ENCODE measurements at regions of chr10 and their contacts with region 1.

Region 1: DNA sequence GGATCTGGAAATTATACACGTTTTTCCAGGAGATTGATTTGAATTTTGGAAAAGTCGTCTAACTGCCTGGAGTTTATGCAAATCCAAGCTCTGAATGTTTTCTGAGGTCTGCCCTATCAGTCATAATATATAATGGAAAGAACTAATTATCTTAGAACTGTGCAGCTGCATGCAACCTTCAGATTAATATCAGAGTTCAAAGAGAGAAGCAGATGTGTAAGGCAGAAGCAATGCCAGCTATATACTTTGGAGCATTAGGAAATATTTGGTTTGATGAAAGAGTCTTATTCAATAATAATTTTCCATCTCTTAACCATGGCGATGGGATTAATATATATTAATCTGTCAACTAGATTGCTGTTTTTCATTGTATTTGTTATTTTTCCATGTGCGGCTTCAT is 500.9 kb downstream of the NEBL start:
- DNase-seq: no peak
- ATAC-seq: no peak
- H3K4me3 Mint-ChIP-seq: no peak overlapping the region
- H3K27ac Mint-ChIP-seq: no peak overlapping the region
- H3K4me1 Mint-ChIP-seq: peaks cover 3% of the 10 kb centered on the region; the same call in 1 of the 2 replicates
- H3K27me3 Mint-ChIP-seq: no peaks in the 10 kb centered on the region
- CTCF ChIP-seq: no peak

Region 2: DNA sequence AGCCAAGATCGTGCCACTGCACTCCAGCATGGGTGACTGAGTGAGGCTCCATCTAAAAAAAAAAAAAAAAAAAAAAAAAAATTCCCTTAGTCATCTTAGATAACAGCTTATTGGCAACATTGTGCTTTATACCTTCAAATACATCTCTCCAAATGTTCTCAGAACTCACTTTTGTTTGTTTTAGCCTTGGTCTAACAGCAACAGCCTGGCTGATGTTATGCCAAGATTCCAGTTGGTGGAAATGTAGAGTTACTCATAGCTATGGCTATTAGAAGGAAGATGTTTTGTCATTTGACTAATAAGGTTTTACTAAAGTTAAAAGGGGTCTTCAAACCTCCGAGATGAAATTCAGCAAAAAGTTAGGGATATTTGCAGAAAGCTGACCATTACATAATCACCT is 19.5 kb after region 1 on chr10:
- CTCF ChIA-PET with region 1: no interaction called
- POLR2A ChIA-PET with region 1: no interaction called
- DNase-seq: no peak
- ATAC-seq: no peak
- H3K4me3 Mint-ChIP-seq: no peak overlapping the region
- H3K27ac Mint-ChIP-seq: no peak overlapping the region
- H3K4me1 Mint-ChIP-seq: peaks cover 15% of the 10 kb centered on the region
- H3K27me3 Mint-ChIP-seq: no peaks in the 10 kb centered on the region
- CTCF ChIP-seq: no peak

Region 3: GRCh38 chr10:20427821-20428220 is 31.6 kb after region 1 on chr10:
- CTCF ChIA-PET with region 1: no interaction called
- POLR2A ChIA-PET with region 1: no interaction called
- DNase-seq: no peak
- ATAC-seq: no peak
- H3K4me3 Mint-ChIP-seq: no peak overlapping the region
- H3K27ac Mint-ChIP-seq: no peak overlapping the region
- H3K4me1 Mint-ChIP-seq: no peaks in the 10 kb centered on the region
- H3K27me3 Mint-ChIP-seq: no peaks in the 10 kb centered on the region; the same call in 1 of the 2 replicates
- CTCF ChIP-seq: no peak

Region 4: DNA sequence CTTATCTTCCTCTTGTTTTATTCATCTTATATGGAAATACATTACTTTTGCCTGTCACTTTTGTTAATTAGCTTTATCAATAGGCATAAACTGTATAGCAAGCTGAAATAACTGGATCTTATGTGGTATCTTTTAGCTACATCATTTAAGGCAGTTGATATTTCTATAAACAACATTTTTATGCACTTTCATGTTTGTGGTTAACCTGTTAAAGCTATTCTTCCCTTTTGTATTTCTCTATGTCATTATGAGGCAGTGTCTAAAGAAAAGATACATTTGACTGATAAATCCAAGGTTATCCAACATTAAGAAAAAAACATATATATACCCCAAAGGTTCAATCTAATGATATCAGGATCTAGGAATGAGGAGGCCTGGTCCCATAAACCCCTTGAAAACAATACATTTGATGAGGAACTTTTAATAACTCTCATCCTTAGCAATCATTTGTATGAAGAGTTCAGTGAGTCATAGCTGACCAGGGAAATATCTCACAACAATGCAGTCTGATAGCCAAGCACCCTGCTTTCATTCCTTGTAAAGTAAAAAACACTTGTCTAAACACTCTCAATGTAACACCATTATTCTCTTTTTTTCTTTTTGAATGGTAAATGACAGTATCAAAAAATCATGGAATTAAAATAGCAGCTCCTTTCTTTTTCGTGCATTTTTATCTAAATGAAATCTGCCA is 200.0 kb after region 1 on chr10:
- CTCF ChIA-PET with region 1: no interaction called
- POLR2A ChIA-PET with region 1: interaction called, 10 read pairs
- DNase-seq: no peak
- ATAC-seq: no peak
- H3K4me3 Mint-ChIP-seq: no peak overlapping the region
- H3K27ac Mint-ChIP-seq: no peak overlapping the region
- H3K4me1 Mint-ChIP-seq: peaks cover 34% of the 10 kb centered on the region
- H3K27me3 Mint-ChIP-seq: no peaks in the 10 kb centered on the region
- CTCF ChIP-seq: no peak